ENCODE measurements at regions of chr20 and their contacts with region 1.

Region 1: DNA sequence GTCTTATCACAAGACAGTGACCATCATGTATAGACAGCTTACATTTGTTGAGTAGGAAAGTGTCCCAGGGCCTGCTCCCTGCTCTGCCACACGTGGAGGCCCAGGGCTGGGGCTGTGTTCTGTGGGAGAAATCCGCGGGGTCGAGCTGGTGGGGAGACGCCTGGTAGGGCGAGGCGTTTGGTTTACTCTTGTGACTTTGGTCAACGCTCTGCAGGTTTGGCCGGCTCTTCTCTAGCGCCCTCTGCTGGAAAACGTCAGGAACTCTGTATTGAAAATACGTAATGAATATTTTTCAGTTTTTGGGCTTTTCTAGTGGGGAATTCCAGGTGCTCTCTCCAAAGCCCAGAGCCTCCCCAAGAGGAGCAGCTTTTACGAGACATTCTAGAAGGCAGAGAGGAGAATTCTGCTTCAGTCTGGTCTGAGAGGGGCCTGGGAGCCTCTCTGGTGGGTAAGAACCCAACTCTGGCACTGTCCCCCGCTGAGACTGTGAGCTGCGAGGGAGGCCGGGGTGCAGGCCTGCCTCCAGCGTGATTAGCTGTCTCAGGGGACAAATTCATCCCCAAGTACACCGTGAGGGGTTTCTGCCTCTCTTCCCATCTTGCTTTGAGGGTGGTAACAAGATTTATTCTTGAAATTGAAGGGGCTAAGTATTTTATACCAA is 112.6 kb upstream of the RALGAPA2 start:
- DNase-seq: peak; percentile 66
- H3K4me3 Mint-ChIP-seq: no peak overlapping the region
- H3K27ac Mint-ChIP-seq: no peak overlapping the region
- H3K4me1 Mint-ChIP-seq: peaks cover 16% of the 10 kb centered on the region
- H3K27me3 Mint-ChIP-seq: peaks cover 15% of the 10 kb centered on the region
- CTCF ChIP-seq: peak; percentile 79

Region 2: DNA sequence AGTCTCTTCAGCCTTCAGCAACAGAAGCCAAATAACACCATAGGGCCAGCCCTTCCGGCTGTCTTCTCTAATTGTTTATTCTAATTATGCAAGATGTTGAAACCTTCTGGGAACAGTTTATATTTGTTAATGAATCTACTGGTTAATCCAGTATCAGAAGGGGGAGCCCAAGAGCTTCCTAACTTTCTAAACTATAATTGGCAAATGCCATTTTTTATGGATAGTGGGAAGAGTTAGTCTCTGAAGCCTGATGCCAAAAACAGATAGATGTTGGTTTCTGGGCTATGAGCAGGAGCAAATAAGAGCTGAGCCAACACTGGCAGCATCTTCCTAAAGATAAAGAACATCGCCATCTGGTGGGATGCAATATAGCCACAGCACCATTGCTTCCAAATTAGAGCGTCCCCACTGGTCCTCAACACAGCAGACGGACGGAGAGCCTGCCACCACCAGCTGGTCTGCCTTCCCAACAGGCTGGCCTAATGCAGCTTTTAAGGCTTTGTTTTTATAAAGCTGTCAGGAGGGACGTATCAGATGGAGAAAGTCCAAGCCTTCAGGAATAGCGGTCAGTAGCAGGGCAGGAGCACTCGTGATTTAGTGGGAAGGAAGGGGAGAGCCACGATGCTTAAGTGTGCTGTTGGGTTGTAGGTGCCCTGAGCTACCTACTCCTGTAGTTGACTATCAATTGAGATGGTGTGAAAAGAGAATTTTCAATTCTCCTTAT is 231.4 kb before region 1 on chr20:
- CTCF ChIA-PET with region 1: interaction called, 93 read pairs
- POLR2A ChIA-PET with region 1: no interaction called
- intact Hi-C with region 1: loop called (anchors 2 kb)
- DNase-seq: peak; percentile 46
- H3K4me3 Mint-ChIP-seq: no peak overlapping the region
- H3K27ac Mint-ChIP-seq: peak overlapping the region; percentile 27
- H3K4me1 Mint-ChIP-seq: peaks cover 10% of the 10 kb centered on the region
- H3K27me3 Mint-ChIP-seq: no peaks in the 10 kb centered on the region
- CTCF ChIP-seq: peak; percentile 49

Region 3: DNA sequence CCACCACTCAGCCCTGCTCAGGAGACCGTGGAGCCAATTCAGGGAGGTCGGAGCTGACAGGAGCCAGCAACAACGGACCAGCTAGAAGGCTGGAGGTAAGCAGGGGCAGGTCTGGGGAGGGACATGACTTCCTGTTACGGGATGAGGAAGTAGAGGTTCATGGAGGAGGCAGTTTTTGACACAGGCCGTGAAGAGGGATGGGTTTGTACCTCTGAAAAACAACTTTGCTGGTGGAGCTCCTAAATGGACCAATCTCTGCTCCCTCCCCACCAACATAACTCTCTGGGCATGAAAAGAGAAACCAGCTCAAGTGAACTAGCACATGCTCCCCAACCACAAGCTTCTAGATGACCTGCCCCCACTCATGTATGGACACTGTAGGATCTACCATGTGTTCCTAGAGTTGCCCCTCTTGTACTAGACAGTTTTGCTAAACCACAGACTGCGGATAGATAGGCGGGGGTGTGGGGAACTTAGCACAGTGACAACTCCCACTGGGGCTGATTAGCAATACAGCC is 144.0 kb before region 1 on chr20:
- CTCF ChIA-PET with region 1: interaction called, 94 read pairs
- POLR2A ChIA-PET with region 1: interaction called, 3 read pairs
- intact Hi-C with region 1: no loop called
- DNase-seq: no peak
- H3K4me3 Mint-ChIP-seq: no peak overlapping the region
- H3K27ac Mint-ChIP-seq: no peak overlapping the region
- H3K4me1 Mint-ChIP-seq: peaks cover 25% of the 10 kb centered on the region
- H3K27me3 Mint-ChIP-seq: no peaks in the 10 kb centered on the region
- CTCF ChIP-seq: no peak

Region 4: DNA sequence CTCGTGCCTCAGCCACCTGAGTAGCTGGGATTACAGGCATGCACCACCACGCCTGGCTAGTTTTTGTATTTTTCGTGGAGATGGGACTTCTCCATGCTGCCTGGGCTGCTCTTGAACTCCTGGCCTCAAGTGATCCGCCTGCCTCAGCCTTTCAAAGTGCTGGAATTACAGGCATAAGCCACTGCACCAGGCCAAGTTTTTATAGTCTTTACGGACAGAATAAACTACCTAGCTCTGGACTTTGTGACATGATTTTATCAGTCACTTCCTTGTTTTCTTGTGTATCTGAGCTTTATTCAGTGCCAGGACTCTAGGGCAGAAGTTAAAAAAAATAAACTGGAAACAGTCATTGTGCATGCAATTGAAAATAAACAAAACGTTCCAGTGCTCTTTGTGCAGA is 65.9 kb before region 1 on chr20:
- CTCF ChIA-PET with region 1: interaction called, 17 read pairs
- POLR2A ChIA-PET with region 1: interaction called, 3 read pairs
- intact Hi-C with region 1: no loop called
- DNase-seq: no peak
- H3K4me3 Mint-ChIP-seq: no peak overlapping the region
- H3K27ac Mint-ChIP-seq: no peak overlapping the region
- H3K4me1 Mint-ChIP-seq: peaks cover 10% of the 10 kb centered on the region
- H3K27me3 Mint-ChIP-seq: no peaks in the 10 kb centered on the region
- CTCF ChIP-seq: no peak

Region 5: DNA sequence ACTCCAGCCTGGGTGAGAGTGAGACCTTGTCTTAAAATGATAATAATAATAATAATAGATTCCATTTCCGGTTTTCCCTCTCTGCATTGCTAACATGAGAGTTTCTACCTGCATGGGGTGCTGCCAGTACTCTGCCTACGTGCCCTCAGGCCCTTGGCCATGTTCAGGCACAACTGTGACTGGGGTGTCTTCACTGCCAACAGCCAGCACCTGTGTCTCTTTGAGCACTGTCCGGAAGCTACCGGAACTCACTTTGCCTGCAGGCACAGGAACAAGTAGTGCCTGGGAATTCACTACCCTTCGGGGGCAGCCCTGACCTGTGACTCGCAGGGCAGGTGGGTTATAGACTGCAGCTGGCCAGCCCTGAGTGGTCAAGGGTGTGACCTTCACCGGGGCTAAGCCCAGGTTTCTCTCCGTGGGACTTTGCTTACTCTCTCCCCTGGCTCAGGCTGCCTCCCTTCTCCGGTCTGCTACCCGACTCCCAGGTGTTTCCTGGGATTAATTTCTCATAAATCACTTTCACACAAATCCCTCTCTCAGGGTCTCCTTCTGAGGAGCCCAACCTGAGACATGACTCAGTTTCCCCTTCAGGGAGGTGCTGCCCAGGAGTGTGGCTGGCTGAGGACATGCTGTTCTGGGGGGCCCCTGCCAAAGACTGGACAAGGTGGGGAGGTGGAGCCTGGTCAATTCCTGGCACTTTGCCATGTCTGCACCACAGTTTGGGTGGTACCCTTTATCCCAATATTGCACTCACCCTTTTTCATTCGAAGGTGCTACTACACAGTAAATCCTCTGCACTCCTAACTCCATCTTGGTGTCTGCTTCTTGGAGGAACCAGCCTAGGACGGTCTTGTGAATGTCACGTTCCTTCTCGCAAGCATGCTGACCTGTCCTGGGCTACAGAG is 33.1 kb before region 1 on chr20:
- CTCF ChIA-PET with region 1: interaction called, 32 read pairs
- POLR2A ChIA-PET with region 1: no interaction called
- intact Hi-C with region 1: no loop called
- DNase-seq: peak; percentile 66
- H3K4me3 Mint-ChIP-seq: no peak overlapping the region
- H3K27ac Mint-ChIP-seq: no peak overlapping the region
- H3K4me1 Mint-ChIP-seq: peaks cover 10% of the 10 kb centered on the region
- H3K27me3 Mint-ChIP-seq: no peaks in the 10 kb centered on the region
- CTCF ChIP-seq: no peak

Region 6: DNA sequence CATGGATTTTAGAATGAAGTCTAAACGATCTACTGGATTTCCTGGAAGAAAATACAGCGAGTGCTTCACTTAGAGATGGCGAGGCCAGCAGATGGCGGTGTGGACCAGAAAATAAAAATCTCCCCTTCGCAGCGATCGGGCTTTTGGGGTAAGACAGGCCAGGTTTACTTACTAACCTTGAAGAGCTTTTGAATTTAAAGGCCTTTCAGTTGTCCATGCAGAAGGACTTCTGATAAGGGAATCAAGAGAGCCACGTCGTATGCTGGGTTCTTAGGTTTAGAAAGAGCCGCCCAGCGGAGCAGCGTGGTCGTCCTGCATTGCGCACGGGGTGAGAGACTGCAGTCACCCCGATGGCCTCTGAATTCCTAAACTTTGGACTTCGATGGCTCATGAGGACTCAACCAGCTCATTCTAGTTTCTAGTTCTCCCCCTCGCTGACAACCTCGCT is 12.5 kb after region 1 on chr20:
- CTCF ChIA-PET with region 1: interaction called, 146 read pairs
- POLR2A ChIA-PET with region 1: interaction called, 3 read pairs
- intact Hi-C with region 1: no loop called
- DNase-seq: peak; percentile 50
- H3K4me3 Mint-ChIP-seq: no peak overlapping the region
- H3K27ac Mint-ChIP-seq: no peak overlapping the region
- H3K4me1 Mint-ChIP-seq: no peaks in the 10 kb centered on the region
- H3K27me3 Mint-ChIP-seq: peaks cover 17% of the 10 kb centered on the region
- CTCF ChIP-seq: peak; percentile 79